Activated T-helper 2 cell treated with anti-CD3 and anti-CD28 coated beads, Interferon-gamma antibody, Interleukin-2, Interleukin-4, amounts not matched to agents 10 μg/mL and 5 μg/mL and 100 μg/mL, durations not matched to agents 14 hours and 24 hours and 36 hours (primary cell): ENCODE measurements at regions of chr17 and their contacts with region 1.

Region 1: DNA sequence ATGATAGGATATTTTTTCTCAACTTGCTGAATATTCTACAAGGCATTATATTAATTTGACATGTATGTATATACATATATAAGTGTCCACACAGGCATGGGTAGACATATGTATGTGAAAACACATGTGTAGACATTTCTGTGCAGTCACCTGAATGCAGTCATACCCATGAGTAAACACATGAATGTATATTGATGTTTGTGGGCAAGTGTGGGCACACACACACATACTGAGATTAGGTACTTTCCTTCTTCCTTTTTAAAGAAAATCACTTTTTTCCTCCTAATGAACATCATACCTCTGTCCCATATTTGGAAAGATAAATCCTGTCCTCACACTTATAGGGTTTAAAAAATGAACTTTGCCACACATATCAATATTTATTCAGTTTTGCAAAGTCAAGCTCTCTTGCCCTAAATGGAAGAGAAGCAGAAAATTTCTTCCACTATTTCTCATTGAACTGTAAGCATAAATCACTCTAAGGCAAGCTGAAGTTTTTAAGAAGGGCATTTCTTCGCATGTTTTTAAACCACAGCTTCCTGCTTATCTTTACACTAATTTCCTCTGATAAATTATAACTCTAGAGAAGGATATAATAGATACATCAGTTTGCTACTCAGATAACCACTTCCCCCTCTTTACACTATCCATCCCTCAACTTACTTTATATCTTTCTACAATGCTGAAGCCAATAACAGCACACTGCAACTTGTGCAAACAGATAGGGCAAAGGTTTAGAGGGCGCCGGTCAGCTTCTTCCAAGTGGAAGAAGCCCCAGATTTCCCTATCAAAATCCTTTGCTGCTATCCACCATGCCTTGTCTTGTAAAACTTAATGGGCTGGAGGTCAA is 49.6 kb upstream of the LRRC37A3 start:
- DNase-seq: no peak
- H3K4me3 Mint-ChIP-seq: peak overlapping the region; percentile 15
- H3K27ac Mint-ChIP-seq: peak overlapping the region; percentile 79
- H3K4me1 Mint-ChIP-seq: peaks cover 62% of the 10 kb centered on the region
- H3K27me3 Mint-ChIP-seq: no peaks in the 10 kb centered on the region

Region 2: DNA sequence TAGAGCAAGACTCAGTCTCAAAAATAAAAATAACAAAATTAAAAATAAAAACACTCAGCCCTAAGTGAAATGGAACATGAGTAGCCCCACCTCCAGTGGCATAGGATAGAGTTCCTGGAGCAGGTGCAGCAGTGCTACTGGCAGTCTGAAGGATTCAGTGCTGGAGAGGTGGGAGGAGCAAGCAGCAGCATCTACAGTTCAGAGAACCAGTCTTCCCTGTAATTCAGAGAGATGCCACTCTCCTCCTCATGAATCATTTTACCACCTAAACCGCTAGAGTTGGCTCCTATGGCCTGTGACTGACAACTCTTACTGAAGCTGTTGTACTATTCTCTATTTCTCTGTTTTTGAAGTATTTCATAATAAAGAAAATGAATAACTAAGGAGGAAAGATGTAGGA is 250.8 kb before region 1 on chr17:
- intact Hi-C with region 1: loop called (anchors 10 kb)
- DNase-seq: no peak
- H3K4me3 Mint-ChIP-seq: no peak overlapping the region
- H3K27ac Mint-ChIP-seq: no peak overlapping the region
- H3K4me1 Mint-ChIP-seq: peaks cover 22% of the 10 kb centered on the region
- H3K27me3 Mint-ChIP-seq: no peaks in the 10 kb centered on the region

Region 3: DNA sequence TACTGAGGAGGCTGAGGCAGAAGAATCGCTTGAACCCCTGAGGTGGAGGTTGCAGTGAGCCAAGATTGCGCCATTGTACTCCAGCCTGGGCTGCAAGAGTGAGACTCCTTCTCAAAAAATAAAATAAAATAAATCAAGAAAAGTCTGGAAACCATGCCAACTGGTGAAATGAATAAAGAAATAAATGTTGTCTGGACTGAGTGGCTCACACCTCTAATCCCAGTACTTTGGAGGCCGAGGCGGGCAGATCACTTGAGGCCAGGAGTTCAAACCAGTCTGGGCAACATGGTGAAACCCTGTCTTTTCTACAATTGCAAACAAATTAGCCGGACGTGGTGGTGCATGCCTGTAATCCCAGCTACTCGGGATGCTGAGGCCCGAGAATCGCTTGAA is 48.9 kb before region 1 on chr17:
- intact Hi-C with region 1: loop called (anchors 5 kb)
- DNase-seq: no peak
- H3K4me3 Mint-ChIP-seq: peak overlapping the region; percentile 83
- H3K27ac Mint-ChIP-seq: peak overlapping the region; percentile 79
- H3K4me1 Mint-ChIP-seq: peaks cover 17% of the 10 kb centered on the region
- H3K27me3 Mint-ChIP-seq: no peaks in the 10 kb centered on the region

Region 4: GRCh38 chr17:64938925-64939474 is 29.9 kb before region 1 on chr17:
- intact Hi-C with region 1: no loop called
- DNase-seq: no peak
- H3K4me3 Mint-ChIP-seq: no peak overlapping the region
- H3K27ac Mint-ChIP-seq: no peak overlapping the region
- H3K4me1 Mint-ChIP-seq: peaks cover 6% of the 10 kb centered on the region
- H3K27me3 Mint-ChIP-seq: peaks cover 2% of the 10 kb centered on the region

Region 5: GRCh38 chr17:64984851-64985521 is 16.1 kb after region 1 on chr17:
- intact Hi-C with region 1: loop called (anchors 2 kb)
- DNase-seq: peak; percentile 64
- H3K4me3 Mint-ChIP-seq: peak overlapping the region; percentile 79
- H3K27ac Mint-ChIP-seq: peak overlapping the region; percentile 99
- H3K4me1 Mint-ChIP-seq: peaks cover 47% of the 10 kb centered on the region
- H3K27me3 Mint-ChIP-seq: no peaks in the 10 kb centered on the region

Region 6: DNA sequence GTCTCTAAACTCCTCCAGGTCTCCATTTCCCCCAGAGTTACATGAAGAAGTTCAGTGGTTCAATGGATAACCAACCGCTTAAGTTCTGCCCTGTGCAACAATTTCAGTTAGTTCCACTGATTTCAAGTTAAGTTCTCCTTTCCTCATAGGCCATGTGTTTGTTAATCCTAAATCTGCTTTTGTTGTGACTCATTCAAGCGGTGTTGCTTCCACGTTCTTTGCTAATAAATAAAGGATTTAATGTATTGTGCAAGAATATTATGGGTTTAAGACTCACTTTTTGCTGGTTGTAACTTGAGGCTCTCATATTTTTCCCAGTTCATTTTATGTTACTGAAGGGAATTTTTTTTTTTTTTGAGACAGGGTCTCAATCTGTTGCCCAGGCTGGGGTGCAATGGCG is 51.4 kb after region 1 on chr17:
- intact Hi-C with region 1: no loop called
- DNase-seq: no peak
- H3K4me3 Mint-ChIP-seq: no peak overlapping the region
- H3K27ac Mint-ChIP-seq: no peak overlapping the region
- H3K4me1 Mint-ChIP-seq: peaks cover 56% of the 10 kb centered on the region
- H3K27me3 Mint-ChIP-seq: no peaks in the 10 kb centered on the region

Region 7: GRCh38 chr17:65100316-65101140 is 131.7 kb after region 1 on chr17:
- intact Hi-C with region 1: loop called (anchors 2 kb)
- DNase-seq: peak; percentile 79
- H3K4me3 Mint-ChIP-seq: peak overlapping the region; percentile 88
- H3K27ac Mint-ChIP-seq: peak overlapping the region; percentile 98
- H3K4me1 Mint-ChIP-seq: peaks cover 31% of the 10 kb centered on the region
- H3K27me3 Mint-ChIP-seq: peaks cover 5% of the 10 kb centered on the region

Region 8: GRCh38 chr17:65137021-65137991 is 168.4 kb after region 1 on chr17 and contains the start of gene RGS9:
- intact Hi-C with region 1: loop called (anchors 5 kb)
- DNase-seq: peak; percentile 87
- H3K4me3 Mint-ChIP-seq: peak within 1 kb of the TSS; percentile 92
- H3K27ac Mint-ChIP-seq: peak within 1 kb of the TSS; percentile 89
- H3K4me1 Mint-ChIP-seq: peaks cover 43% of the 10 kb centered on the region
- H3K27me3 Mint-ChIP-seq: no peaks in the 10 kb centered on the region
- total RNA-seq, gene RGS9: 16.1 and 16.3 TPM in 2 replicates